ENCODE measurements at regions of chr6 and their contacts with region 1.

Region 1: DNA sequence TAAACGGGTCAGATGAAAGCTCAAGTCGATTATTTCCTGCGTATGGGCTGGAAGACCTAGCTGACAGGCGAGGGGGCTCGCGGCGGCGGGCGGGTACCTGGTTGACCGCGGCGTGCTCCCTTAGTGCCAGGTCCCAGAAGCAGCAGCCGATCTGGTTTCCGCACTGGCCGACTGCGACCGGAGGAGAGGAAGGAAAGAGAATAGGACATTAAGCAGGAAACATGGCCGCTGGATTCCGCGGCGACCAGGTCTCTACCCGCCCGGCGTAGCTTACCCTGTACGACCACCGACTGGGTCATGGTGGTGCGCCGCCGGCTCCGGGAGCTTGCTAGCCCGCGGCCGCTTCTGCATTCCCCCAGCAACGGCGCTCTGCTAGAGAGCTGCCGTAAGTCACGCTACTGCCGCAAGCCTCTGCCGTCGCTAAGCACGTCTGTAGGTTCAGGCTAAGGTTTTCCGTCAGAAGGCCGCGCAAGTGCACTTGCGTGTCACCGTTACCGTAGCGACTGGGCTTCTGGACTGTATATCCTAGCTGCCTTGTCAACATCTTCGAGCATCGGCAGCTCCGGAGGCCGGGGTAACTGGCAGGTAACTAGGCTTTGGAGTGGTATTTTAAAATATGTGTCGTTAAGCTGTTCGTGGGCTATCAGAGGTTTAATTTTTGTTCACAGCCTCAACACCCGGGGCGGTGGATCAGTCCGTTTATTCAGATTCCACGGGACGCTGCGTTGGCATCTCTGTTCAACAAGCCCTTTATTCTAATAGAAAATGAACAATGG is at the starts of genes FAM229B and TUBE1:
- DNase-seq: peak; percentile 95
- ATAC-seq: peak; percentile 96
- H3K4me3 Mint-ChIP-seq: no peak within 1 kb of the TSS
- H3K27ac Mint-ChIP-seq: no peak within 1 kb of the TSS
- H3K4me1 Mint-ChIP-seq: peaks cover 3% of the 10 kb centered on the region
- H3K27me3 Mint-ChIP-seq: peaks cover 22% of the 10 kb centered on the region
- total RNA-seq, gene FAM229B: 1.9 to 2.2 TPM
- total RNA-seq, gene TUBE1: 16.0 to 16.5 TPM

Region 2: GRCh38 chr6:112116215-112116614 is 28.9 kb after region 1 on chr6:
- CTCF ChIA-PET with region 1: interaction called, 12 read pairs
- POLR2A ChIA-PET with region 1: interaction called, 3 read pairs
- DNase-seq: no peak
- ATAC-seq: no peak
- H3K4me3 Mint-ChIP-seq: no peak overlapping the region
- H3K27ac Mint-ChIP-seq: no peak overlapping the region
- H3K4me1 Mint-ChIP-seq: peaks cover 17% of the 10 kb centered on the region
- H3K27me3 Mint-ChIP-seq: peaks cover 15% of the 10 kb centered on the region

Measured in activated CD8-positive, alpha-beta T cell treated with anti-CD3 and anti-CD28 coated beads, Interleukin-2, amount 10 ng/mL, durations not matched to agents 7 days and 5 days (primary cell).